Activated CD8-positive, alpha-beta memory T cell treated with anti-CD3 and anti-CD28 coated beads, Interleukin-2, amount 10 ng/mL, durations not matched to agents 7 days and 5 days (primary cell): ENCODE measurements at regions of chr1 and their contacts with region 1.

Region 1: GRCh38 chr1:40531381-40532061 is at the start of gene ZNF684:
- DNase-seq: peak; percentile 93
- ATAC-seq: peak; percentile 97
- H3K4me3 Mint-ChIP-seq: peak within 1 kb of the TSS; percentile 95
- H3K27ac Mint-ChIP-seq: peak within 1 kb of the TSS; percentile 87
- H3K4me1 Mint-ChIP-seq: peaks cover 22% of the 10 kb centered on the region
- H3K27me3 Mint-ChIP-seq: peaks cover 11% of the 10 kb centered on the region
- total RNA-seq, gene ZNF684: 8.7 to 10.0 TPM

Region 2: DNA sequence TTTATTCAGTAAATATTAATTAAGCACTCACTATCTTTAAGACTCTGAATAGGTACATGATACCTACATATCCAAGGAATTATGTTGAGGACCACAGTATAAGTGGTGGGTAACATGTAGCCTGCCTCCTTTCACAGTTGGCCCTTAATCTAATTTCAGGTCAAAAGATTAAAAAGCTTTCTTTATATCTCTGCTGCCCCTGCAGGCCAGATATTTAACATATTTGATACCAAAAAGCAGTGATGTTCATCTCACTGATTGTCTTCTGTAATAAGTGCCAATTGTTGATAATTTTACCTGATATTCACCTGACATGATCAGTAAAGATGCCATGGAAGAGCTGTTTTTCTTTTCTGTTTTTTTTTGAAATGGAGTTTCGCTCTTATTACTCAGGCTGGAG is 333.9 kb before region 1 on chr1:
- CTCF ChIA-PET with region 1: no interaction called
- DNase-seq: no peak
- ATAC-seq: no peak
- H3K4me3 Mint-ChIP-seq: no peak overlapping the region
- H3K27ac Mint-ChIP-seq: no peak overlapping the region
- H3K4me1 Mint-ChIP-seq: peaks cover 1% of the 10 kb centered on the region
- H3K27me3 Mint-ChIP-seq: no peaks in the 10 kb centered on the region

Region 3: DNA sequence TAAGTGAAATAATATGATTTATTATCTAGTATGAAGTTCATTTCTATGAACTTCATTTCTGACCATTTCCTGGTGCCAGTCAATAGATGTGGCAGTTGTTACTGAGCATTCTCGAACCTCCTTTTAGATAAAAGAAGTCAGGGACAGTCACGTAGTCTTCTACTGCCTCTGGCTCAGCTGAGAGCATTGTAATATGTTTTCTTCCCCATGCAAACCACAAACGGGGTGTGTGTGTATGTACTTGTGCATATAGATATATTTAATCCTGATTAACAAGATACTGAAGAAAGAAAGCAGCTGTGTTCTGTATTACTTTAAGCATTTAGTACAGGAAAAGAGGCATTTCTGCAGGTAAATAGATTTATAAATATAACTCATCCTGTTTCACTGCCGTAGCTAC is 21.5 kb after region 1 on chr1:
- CTCF ChIA-PET with region 1: interaction called, 11 read pairs
- DNase-seq: no peak
- ATAC-seq: no peak
- H3K4me3 Mint-ChIP-seq: no peak overlapping the region
- H3K27ac Mint-ChIP-seq: no peak overlapping the region
- H3K4me1 Mint-ChIP-seq: no peaks in the 10 kb centered on the region
- H3K27me3 Mint-ChIP-seq: peaks cover 3% of the 10 kb centered on the region

Region 4: DNA sequence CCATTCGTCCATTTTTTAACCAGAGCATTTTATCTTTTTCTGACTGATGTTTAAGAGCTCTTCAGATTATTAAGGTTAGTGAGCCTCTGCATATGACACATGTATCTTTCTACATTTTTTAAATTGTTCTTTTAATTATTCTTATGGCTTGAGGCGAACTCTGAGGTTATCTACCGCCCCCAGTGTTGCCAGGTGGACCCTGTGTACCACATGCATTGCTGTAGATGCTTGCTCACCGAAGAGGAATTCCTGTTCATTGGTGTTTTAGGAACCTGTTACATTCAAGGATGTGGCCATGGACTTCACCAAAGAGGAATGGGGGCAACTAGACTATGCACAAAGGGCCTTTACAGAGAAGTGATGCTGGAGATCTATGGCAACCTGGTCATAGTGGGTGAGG is 31.7 kb after region 1 on chr1:
- CTCF ChIA-PET with region 1: no interaction called
- DNase-seq: no peak
- ATAC-seq: no peak
- H3K4me3 Mint-ChIP-seq: no peak overlapping the region
- H3K27ac Mint-ChIP-seq: no peak overlapping the region
- H3K4me1 Mint-ChIP-seq: peaks cover 6% of the 10 kb centered on the region
- H3K27me3 Mint-ChIP-seq: peaks cover 6% of the 10 kb centered on the region

Region 5: DNA sequence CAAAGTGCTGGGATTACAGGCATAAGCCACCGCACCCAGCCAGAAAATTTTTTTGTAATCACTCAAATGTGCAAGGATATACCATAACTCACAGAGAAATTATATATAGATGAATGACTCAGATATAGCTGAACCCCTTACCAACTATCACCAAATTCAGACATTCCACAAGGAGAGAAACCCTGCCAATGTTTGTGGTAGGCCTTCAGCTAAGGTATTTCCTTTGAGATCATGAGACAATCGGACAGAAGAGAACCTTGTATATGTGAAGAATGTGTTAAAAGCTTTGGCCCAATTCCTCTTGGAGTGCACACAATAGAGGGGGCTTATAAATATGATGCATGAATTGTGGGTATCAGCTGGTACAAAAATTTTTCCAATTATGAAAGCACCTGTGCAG is 50.6 kb after region 1 on chr1:
- CTCF ChIA-PET with region 1: no interaction called
- DNase-seq: no peak
- ATAC-seq: no peak
- H3K4me3 Mint-ChIP-seq: no peak overlapping the region
- H3K27ac Mint-ChIP-seq: no peak overlapping the region
- H3K4me1 Mint-ChIP-seq: peaks cover 16% of the 10 kb centered on the region
- H3K27me3 Mint-ChIP-seq: peaks cover 19% of the 10 kb centered on the region